Calu3 (cell line): ENCODE measurements at regions of chr1 and their contacts with region 1.

Region 1: GRCh38 chr1:189237008-189237407 is 1240.7 kb downstream of the BRINP3 start:
- DNase-seq: no peak
- H3K4me3 Mint-ChIP-seq: no peak overlapping the region
- H3K27ac Mint-ChIP-seq: no peak overlapping the region
- H3K4me1 Mint-ChIP-seq: no peaks in the 10 kb centered on the region
- H3K27me3 Mint-ChIP-seq: no peaks in the 10 kb centered on the region
- CTCF ChIP-seq: no peak

Region 2: DNA sequence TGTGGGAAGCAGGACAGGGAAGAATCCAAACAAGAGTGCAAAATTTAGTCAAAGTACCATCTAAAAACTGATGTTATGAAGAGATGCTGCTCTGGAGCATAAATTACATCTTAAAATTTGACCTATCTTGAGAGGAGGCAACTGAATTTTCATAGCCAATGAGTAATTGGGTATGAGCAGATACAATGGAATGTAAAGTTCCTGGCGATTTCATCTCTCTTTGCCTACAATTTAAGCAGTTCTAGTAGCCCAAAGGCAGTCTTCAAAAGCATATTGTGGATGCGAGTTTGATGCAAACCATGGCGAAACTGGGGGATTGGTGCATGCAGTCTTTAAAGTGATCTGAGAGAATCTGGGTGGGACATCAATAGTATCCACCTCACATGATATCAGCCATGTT is 25.3 kb before region 1 on chr1:
- CTCF ChIA-PET with region 1: no interaction called
- intact Hi-C with region 1: loop called (anchors 1 kb)
- DNase-seq: no peak
- H3K4me3 Mint-ChIP-seq: no peak overlapping the region
- H3K27ac Mint-ChIP-seq: no peak overlapping the region
- H3K4me1 Mint-ChIP-seq: peaks cover 6% of the 10 kb centered on the region
- H3K27me3 Mint-ChIP-seq: no peaks in the 10 kb centered on the region
- CTCF ChIP-seq: no peak

Region 3: GRCh38 chr1:189538292-189538691 is 301.3 kb after region 1 on chr1:
- CTCF ChIA-PET with region 1: no interaction called
- intact Hi-C with region 1: no loop called
- DNase-seq: no peak
- H3K4me3 Mint-ChIP-seq: no peak overlapping the region
- H3K27ac Mint-ChIP-seq: no peak overlapping the region
- H3K4me1 Mint-ChIP-seq: peaks cover 12% of the 10 kb centered on the region
- H3K27me3 Mint-ChIP-seq: no peaks in the 10 kb centered on the region
- CTCF ChIP-seq: no peak